Activated B cell treated with CpG ODN at 0.5 μM for 24 hours (primary cell): ENCODE measurements at regions of chr6 and their contacts with region 1.

Region 1: DNA sequence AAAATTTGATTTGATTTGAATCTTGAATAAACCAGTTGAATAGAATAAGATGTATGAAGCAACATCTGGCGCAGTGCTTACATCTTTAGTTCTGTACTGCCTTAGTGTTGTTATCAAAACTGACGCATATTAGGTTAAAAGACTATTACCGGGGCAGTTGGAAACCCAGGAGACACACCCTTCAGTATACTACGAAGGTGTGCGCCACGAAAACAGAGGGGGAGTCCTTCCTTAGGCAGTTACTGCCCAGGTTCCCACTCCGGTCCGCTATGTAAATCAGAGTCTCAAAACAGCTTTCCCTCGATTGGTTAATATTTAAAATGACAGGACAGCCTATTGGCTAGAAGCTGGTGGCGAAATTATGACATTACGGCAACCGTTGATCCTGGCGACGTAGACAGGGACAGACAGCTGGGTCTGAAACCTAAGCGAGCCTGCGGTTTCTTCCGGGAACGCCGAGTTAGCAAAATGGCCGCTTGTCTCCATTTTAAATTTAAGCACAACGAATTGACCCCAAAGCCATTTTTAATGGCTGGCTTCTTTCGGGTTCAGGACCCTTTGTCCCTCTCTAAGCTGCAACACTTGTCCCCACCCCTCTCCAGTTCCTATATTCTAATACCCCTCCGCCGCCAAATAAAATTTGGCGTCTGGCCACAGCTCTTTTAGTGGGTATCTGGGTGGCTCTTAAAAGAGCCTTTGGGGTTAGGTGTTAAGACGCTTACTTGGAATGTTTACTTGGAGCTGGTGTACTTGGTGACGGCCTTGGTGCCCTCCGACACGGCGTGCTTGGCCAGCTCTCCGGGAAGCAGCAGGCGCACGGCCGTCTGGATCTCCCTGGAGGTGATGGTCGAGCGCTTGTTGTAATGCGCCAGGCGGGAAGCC is 35.8 kb downstream of the HFE start:
- DNase-seq: peak; percentile 68
- ATAC-seq: peak; percentile 60
- H3K4me3 Mint-ChIP-seq: peak overlapping the region; percentile 94
- H3K27ac Mint-ChIP-seq: peak overlapping the region; percentile 99
- H3K4me1 Mint-ChIP-seq: peaks cover 34% of the 10 kb centered on the region
- H3K27me3 Mint-ChIP-seq: no peaks in the 10 kb centered on the region
- CTCF ChIP-seq: no peak

Region 2: DNA sequence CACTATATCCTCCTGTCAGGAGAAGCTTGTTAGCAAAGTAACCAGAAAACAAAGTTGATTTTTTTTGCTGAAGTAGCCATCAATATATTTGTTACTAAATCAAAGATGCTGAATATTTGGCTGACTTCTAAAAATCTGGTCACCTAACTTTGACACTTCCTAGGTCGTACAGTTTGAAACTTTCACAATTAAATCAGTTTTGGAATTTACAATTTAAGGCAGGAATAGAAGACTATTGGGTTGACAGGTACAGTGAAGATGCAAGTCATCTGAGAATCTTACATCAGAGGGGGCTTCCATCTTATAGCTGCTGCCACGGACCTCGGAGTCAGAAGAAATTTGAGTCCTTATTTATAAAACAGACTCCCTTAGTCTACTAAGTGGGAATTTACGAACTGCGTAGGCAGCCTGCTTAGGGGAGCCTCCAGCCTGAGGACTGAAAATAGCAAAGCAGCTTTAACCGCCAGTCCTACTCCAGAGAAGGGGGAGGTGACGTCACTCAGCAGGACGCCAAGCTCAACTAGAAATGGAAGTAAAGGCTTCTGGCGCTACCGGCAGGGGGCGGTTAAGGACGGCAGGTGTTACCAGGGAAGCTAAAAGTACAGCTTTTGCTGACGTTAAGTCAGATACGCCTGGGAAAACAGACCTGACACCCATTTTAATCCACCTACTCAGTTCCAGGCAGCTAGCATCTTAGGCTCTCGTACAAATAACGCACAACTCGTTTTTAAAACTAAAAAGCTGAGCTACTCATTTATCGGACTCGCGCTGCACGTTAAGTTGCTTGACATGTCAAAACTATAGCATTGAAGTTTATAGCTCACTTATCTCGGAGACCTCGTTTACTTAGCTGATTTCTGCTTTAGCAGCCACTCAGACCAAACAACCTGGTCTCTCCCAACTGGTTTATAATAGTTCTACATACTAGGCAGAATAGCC is 96.9 kb before region 1 on chr6:
- CTCF ChIA-PET with region 1: no interaction called
- POLR2A ChIA-PET with region 1: interaction called, 82 read pairs
- intact Hi-C with region 1: no loop called
- DNase-seq: peak; percentile 76
- ATAC-seq: peak; percentile 39
- H3K4me3 Mint-ChIP-seq: peak overlapping the region; percentile 96
- H3K27ac Mint-ChIP-seq: peak overlapping the region; percentile 99
- H3K4me1 Mint-ChIP-seq: peaks cover 35% of the 10 kb centered on the region
- H3K27me3 Mint-ChIP-seq: peaks cover 2% of the 10 kb centered on the region
- CTCF ChIP-seq: no peak

Region 3: DNA sequence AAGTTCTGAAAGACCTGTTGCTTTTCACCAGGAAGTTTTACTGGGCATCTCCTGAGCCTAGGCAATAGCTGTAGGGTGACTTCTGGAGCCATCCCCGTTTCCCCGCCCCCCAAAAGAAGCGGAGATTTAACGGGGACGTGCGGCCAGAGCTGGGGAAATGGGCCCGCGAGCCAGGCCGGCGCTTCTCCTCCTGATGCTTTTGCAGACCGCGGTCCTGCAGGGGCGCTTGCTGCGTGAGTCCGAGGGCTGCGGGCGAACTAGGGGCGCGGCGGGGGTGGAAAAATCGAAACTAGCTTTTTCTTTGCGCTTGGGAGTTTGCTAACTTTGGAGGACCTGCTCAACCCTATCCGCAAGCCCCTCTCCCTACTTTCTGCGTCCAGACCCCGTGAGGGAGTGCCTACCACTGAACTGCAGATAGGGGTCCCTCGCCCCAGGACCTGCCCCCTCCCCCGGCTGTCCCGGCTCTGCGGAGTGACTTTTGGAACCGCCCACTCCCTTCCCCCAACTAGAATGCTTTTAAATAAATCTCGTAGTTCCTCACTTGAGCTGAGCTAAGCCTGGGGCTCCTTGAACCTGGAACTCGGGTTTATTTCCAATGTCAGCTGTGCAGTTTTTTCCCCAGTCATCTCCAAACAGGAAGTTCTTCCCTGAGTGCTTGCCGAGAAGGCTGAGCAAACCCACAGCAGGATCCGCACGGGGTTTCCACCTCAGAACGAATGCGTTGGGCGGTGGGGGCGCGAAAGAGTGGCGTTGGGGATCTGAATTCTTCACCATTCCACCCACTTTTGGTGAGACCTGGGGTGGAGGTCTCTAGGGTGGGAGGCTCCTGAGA is 35.5 kb before region 1 on chr6 and contains the start of gene HFE:
- CTCF ChIA-PET with region 1: no interaction called
- POLR2A ChIA-PET with region 1: interaction called, 16 read pairs
- intact Hi-C with region 1: no loop called
- DNase-seq: peak; percentile 46
- ATAC-seq: peak; percentile 69
- H3K4me3 Mint-ChIP-seq: peak within 1 kb of the TSS; percentile 89
- H3K27ac Mint-ChIP-seq: peak within 1 kb of the TSS; percentile 82
- H3K4me1 Mint-ChIP-seq: peaks cover 43% of the 10 kb centered on the region
- H3K27me3 Mint-ChIP-seq: no peaks in the 10 kb centered on the region
- CTCF ChIP-seq: no peak
- total RNA-seq, gene HFE: 0.98 and 1.1 TPM in 2 replicates

Region 4: GRCh38 chr6:26175428-26176181 is 52.6 kb after region 1 on chr6:
- CTCF ChIA-PET with region 1: interaction called, 3 read pairs
- POLR2A ChIA-PET with region 1: interaction called, 136 read pairs
- intact Hi-C with region 1: loop called (anchors 1 kb)
- DNase-seq: no peak
- ATAC-seq: no peak
- H3K4me3 Mint-ChIP-seq: no peak overlapping the region
- H3K27ac Mint-ChIP-seq: peak overlapping the region; percentile 65
- H3K4me1 Mint-ChIP-seq: peaks cover 38% of the 10 kb centered on the region
- H3K27me3 Mint-ChIP-seq: no peaks in the 10 kb centered on the region
- CTCF ChIP-seq: no peak

Region 5: DNA sequence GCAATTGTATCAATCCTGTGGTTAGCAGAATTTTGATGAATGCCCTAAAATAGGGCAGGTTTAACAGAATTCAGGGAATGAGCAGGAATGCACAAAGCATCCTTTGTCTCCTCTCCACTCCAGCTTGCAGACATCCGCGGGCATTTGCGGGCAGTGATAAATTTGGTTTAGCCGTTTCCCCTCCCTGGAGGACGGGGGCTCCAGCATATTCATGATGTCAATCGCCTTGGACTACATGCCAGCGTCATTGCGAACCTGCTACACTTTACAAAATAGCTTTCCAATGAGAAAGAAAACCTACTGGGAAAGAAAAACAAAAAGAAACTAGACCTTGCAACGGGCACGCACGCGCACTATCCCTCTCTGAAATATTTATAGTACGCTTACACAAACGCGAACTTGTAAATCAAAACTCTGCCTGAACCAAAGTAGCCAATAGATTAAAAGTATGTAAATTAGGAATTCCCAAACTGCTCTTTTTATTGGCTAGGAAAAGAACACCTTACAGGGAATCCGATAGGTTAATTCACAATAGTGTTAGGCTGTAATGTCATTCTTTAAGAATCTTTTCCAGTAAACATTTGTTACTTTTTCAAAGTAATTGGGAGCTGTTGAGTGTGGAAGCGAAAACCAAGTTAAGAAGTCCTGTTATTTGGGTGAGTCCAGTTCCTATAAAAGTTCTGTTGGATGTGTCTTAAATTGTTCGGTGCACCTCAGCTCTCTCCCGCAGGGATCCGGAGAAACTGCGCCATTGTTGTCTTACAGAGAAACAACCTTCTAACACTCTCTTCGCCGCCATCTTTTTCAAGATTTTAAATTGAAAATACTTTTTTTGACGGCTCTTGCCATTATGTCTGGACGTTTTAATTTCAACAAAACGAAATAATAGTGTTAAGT is 100.9 kb after region 1 on chr6:
- CTCF ChIA-PET with region 1: no interaction called
- POLR2A ChIA-PET with region 1: interaction called, 24 read pairs
- intact Hi-C with region 1: no loop called
- DNase-seq: no peak
- ATAC-seq: peak; percentile 87
- H3K4me3 Mint-ChIP-seq: no peak overlapping the region
- H3K27ac Mint-ChIP-seq: no peak overlapping the region
- H3K4me1 Mint-ChIP-seq: peaks cover 4% of the 10 kb centered on the region
- H3K27me3 Mint-ChIP-seq: no peaks in the 10 kb centered on the region
- CTCF ChIP-seq: no peak

Region 6: DNA sequence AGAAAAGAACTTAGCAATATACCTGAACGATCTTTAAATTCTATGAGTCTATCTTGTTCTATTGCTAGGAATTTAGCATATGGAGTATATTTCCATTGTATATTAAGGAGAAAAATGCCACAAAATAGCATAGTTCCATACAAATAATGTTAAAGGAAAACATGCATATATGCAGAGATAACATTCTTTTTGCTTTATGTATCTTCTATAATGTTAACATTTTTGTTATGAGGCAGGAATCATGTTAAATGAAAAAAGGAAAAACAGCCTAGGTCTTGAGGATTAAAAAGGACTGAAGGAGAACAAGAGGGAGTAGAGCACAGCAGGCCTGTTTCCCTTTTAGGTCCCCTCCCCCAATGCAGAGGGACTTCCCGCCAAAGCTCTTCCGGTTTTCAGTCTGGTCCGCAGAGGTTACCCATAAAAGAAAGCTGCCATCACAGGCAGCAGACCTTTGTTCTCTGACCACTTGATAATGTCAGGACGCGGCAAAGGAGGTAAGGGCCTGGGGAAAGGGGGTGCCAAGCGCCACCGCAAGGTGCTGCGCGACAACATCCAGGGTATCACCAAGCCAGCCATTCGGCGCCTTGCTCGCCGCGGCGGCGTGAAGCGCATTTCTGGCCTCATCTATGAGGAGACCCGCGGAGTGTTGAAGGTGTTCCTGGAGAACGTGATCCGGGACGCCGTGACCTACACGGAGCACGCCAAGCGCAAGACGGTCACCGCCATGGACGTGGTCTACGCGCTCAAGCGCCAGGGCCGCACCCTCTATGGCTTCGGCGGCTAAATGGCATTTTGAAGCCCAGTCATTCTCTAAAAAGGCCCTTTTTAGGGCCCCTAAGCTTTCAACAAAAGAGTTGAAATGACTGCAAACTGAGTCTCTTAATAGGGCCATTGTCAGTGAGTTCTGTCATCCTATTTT is 1016.1 kb after region 1 on chr6:
- CTCF ChIA-PET with region 1: no interaction called
- POLR2A ChIA-PET with region 1: interaction called, 59 read pairs
- intact Hi-C with region 1: loop called (anchors 2 kb)
- DNase-seq: peak; percentile 59
- ATAC-seq: peak; percentile 82
- H3K4me3 Mint-ChIP-seq: peak overlapping the region; percentile 97
- H3K27ac Mint-ChIP-seq: peak overlapping the region; percentile 98
- H3K4me1 Mint-ChIP-seq: peaks cover 62% of the 10 kb centered on the region
- H3K27me3 Mint-ChIP-seq: no peaks in the 10 kb centered on the region
- CTCF ChIP-seq: no peak

Region 7: GRCh38 chr6:27864906-27865849 is 1742.1 kb after region 1 on chr6:
- CTCF ChIA-PET with region 1: no interaction called
- POLR2A ChIA-PET with region 1: interaction called, 25 read pairs
- intact Hi-C with region 1: no loop called
- DNase-seq: peak; percentile 68
- ATAC-seq: peak; percentile 85
- H3K4me3 Mint-ChIP-seq: peak overlapping the region; percentile 98
- H3K27ac Mint-ChIP-seq: peak overlapping the region; percentile 99
- H3K4me1 Mint-ChIP-seq: peaks cover 48% of the 10 kb centered on the region
- H3K27me3 Mint-ChIP-seq: no peaks in the 10 kb centered on the region
- CTCF ChIP-seq: no peak